ENCODE measurements at regions of chr13 and their contacts with region 1.

Region 1: GRCh38 chr13:95660981-95661581 is 15.9 kb upstream of the DNAJC3 start:
- DNase-seq: no peak
- H3K4me3 ChIP-seq: no peak overlapping the region
- H3K27ac ChIP-seq: no peak overlapping the region
- H3K4me1 ChIP-seq: no peaks in the 10 kb centered on the region
- H3K27me3 ChIP-seq: no peaks in the 10 kb centered on the region
- CTCF ChIP-seq: peak; percentile 36 to 47 (median 45)
- EP300 ChIP-seq: no peak
- POLR2A ChIP-seq: no peak

Region 2: DNA sequence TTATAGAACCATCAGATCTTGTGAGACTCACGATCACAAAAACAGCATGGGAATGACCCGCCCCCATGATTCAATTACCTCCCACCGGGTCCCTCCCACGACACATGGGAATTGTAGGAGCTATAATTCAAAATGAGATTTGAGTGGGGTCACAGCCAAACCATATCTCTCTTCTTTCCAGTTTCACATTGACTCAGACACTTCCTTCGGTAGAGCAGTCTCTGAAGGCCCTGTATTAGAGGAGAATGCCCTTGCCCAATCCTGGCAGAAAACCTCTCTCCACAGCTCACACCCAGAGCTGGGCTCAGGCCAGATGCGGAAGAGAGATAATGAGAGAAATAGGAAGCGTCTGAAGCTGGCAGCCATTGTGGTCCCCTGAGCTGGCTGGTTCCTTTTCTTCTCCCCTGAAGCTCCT is 180.9 kb before region 1 on chr13:
- intact Hi-C with region 1: no loop called
- DNase-seq: no peak
- H3K4me3 ChIP-seq: no peak overlapping the region
- H3K27ac ChIP-seq: no peak overlapping the region
- H3K4me1 ChIP-seq: peaks cover 0 to 6% (median 0%) of the 10 kb centered on the region in 4 donors
- H3K27me3 ChIP-seq: peaks cover 0 to 12% (median 0%) of the 10 kb centered on the region in 4 donors
- CTCF ChIP-seq: no peak
- EP300 ChIP-seq: no peak
- POLR2A ChIP-seq: no peak

Region 3: DNA sequence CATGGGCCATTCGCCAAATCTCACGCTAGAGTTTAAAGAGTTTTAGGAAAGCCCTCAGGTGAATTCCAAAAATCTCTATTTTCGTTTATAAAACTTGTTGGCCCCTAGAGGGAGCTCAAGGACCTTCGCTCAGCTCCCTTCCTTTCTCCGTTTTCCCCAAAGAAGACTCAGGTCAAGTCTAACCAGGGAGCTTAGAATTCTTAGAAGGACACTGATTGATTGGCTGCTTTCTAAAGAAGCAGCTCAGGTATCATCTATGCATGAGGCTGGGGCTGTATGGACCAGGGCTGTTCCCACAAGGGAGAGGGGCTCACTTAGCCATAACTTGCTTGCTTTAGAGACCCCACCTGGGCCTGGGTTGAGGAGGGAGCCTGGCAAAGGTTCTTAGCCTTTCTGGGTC is 37.1 kb before region 1 on chr13:
- intact Hi-C with region 1: loop called (anchors 5 kb)
- DNase-seq: peak; percentile 7
- H3K4me3 ChIP-seq: no peak overlapping the region
- H3K27ac ChIP-seq: no peak overlapping the region
- H3K4me1 ChIP-seq: peaks cover 0 to 5% (median 0%) of the 10 kb centered on the region in 4 donors
- H3K27me3 ChIP-seq: no peaks in the 10 kb centered on the region
- CTCF ChIP-seq: peak; percentile 55 to 65 (median 64)
- EP300 ChIP-seq: no peak
- POLR2A ChIP-seq: no peak

Region 4: GRCh38 chr13:95784161-95784899 is 123.2 kb after region 1 on chr13:
- intact Hi-C with region 1: no loop called
- DNase-seq: no peak
- H3K4me3 ChIP-seq: no peak overlapping the region
- H3K27ac ChIP-seq: peak overlapping the region in 1 of 4 donors; percentile 4
- H3K4me1 ChIP-seq: peaks cover 4 to 16% (median 13%) of the 10 kb centered on the region in 4 donors
- H3K27me3 ChIP-seq: no peaks in the 10 kb centered on the region
- CTCF ChIP-seq: no peak
- EP300 ChIP-seq: no peak
- POLR2A ChIP-seq: no peak

Measured in esophagus muscularis mucosa (tissue), 4 donors.